MCF 10A (cell line): ENCODE measurements at regions of chr4 and their contacts with region 1.

Region 1: DNA sequence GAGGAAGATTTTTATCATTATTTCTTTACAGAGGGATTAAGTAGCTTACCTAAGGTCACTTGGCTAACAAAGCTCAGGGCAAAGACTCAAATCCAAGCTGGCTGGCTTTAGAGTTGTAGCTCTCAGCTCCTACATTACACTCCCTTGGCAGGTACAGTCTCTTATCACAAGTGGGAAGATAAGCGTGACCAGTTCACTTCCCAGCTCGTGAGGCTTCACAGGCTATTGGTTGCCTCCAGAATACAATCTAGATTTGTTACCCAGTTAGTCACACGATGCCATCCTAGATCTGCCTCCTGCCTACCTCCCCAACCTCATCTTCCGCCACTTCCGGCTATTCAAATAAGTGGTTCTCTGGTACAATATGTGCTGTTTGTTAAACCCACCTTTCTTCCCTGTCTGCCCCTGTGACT is 3.7 kb downstream of the MMRN1 start:
- DNase-seq: no peak
- H3K4me3 Mint-ChIP-seq: no peak overlapping the region
- H3K27ac Mint-ChIP-seq: no peak overlapping the region
- H3K4me1 Mint-ChIP-seq: no peaks in the 10 kb centered on the region
- H3K27me3 Mint-ChIP-seq: no peaks in the 10 kb centered on the region
- CTCF ChIP-seq: no peak

Region 2: GRCh38 chr4:89586864-89587263 is 311.4 kb before region 1 on chr4:
- CTCF ChIA-PET with region 1: interaction called, 3 read pairs
- POLR2A ChIA-PET with region 1: no interaction called
- intact Hi-C with region 1: loop called (anchors 1 kb)
- DNase-seq: peak; percentile 24
- H3K4me3 Mint-ChIP-seq: no peak overlapping the region
- H3K27ac Mint-ChIP-seq: no peak overlapping the region
- H3K4me1 Mint-ChIP-seq: no peaks in the 10 kb centered on the region
- H3K27me3 Mint-ChIP-seq: no peaks in the 10 kb centered on the region
- CTCF ChIP-seq: peak; percentile 13

Region 3: DNA sequence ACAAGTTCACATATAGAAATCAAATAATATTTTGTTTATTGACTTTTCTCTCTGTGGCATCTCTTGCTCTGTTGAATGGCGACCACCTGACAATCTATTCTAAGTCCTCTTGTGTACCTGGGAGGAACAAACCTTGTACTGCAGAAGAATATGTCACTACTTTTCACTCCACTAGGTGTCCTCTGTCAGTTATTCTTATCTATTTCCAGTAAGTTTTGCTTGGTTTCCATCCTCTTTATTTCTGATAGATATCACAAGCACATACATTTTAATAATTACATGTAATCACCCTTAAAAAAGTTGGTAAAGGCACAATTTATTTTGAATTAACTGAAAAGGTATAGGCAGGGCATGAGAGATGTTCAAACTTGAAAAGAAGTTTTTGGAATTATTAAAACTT is 299.7 kb before region 1 on chr4:
- CTCF ChIA-PET with region 1: no interaction called
- POLR2A ChIA-PET with region 1: no interaction called
- intact Hi-C with region 1: loop called (anchors 1 kb)
- DNase-seq: peak; percentile 41
- H3K4me3 Mint-ChIP-seq: no peak overlapping the region
- H3K27ac Mint-ChIP-seq: no peak overlapping the region
- H3K4me1 Mint-ChIP-seq: no peaks in the 10 kb centered on the region
- H3K27me3 Mint-ChIP-seq: no peaks in the 10 kb centered on the region
- CTCF ChIP-seq: peak; percentile 38

Region 4: DNA sequence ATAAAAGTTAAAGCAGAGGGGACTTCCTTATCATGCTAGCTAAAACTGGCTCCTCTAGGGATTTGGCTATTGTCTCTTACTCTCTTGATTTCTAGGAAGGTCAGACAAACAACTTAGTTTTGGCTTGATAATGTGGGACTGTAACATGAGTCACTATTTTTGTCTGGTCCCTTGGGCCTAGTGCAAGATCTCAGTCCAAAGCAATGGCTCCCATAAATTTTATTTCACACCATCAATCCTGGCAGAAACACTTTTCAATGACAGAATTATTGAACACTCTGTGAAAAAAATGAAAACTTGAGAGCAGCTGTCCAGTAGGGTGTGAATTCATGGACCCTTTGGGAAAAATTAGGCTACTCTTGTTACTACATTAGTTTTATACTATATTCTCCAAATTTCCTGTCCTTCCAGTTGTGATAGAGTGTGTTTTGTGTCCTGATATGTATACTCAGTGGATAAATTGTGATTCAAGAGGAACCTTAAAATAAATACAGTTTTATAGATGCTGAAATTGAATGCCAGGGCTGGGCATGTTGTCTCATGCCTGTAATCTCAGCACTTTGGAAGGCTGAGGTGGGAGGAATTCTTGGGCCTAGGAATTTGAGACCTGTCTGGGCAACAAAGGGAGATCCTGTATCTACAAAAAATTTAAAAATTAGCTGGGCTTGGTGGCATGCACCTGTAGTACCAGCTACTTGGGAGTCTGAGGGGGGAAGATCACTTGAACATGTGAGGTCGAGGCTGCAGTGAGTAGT is 50.6 kb before region 1 on chr4:
- CTCF ChIA-PET with region 1: no interaction called
- POLR2A ChIA-PET with region 1: no interaction called
- intact Hi-C with region 1: no loop called
- DNase-seq: no peak
- H3K4me3 Mint-ChIP-seq: no peak overlapping the region
- H3K27ac Mint-ChIP-seq: peak overlapping the region; percentile 63
- H3K4me1 Mint-ChIP-seq: peaks cover 11% of the 10 kb centered on the region
- H3K27me3 Mint-ChIP-seq: no peaks in the 10 kb centered on the region
- CTCF ChIP-seq: no peak

Region 5: DNA sequence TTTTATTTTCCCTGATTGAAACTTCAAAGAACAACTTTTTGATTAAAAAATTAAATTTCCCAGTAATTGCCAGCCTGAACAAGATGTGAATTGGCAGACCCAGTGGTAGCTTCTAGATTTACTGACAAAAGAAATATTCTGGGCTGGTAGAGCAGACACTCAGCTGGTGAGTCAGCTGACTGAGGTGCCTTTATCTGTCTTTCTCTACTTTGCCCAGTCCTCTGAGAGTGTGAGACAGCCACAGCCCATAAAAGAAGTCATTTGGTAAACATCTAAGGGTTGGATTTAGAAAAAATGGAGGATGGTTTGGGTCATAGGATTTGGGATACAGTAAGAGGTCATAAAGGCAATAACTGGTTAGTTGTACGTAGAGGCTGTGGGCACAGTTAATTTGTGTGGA is 283.3 kb after region 1 on chr4:
- CTCF ChIA-PET with region 1: no interaction called
- POLR2A ChIA-PET with region 1: no interaction called
- intact Hi-C with region 1: no loop called
- DNase-seq: no peak
- H3K4me3 Mint-ChIP-seq: no peak overlapping the region
- H3K27ac Mint-ChIP-seq: no peak overlapping the region
- H3K4me1 Mint-ChIP-seq: no peaks in the 10 kb centered on the region
- H3K27me3 Mint-ChIP-seq: no peaks in the 10 kb centered on the region
- CTCF ChIP-seq: no peak